ENCODE measurements at regions of chr19 and their contacts with region 1.

Region 1: DNA sequence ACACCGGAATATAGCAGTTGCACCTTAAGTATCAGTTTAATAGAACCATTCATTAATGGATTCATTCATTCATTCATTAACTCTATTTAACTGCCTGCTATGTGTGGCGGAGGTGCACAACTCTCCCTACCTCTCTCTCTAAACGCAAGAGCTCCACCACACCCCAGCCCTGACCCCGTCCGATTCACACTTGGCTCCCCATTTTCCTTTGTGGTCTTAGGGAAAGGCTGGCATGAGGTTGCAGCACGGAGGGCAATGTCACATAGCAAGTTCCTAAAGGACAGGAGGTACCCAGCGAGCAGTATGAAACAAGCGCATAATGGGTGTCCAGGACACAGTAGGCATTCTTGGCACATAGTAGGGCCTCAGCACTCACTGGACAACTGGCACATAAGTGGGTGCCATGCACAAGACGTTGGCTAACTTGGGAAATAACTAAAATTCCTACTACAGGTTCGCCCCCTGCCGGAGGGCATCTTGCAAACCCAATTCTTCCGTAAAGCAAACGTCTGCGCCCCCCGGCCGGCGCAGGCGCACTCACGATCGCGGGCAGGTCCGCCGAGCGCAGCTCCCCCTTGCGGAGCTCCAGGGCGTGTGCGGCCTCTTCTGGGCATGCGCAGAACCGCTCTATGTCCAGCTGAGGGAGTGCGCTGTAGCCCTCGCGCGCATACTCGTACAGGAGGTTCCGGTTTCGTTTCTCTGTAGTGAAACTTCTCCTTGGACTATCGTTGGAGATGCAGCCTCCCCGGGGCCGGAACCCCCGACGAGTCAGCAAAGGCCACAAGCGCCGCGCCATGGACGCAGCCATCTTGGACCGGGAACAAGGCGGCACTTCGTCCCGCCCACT is at the start of gene SARS2:
- DNase-seq: peak; percentile 90 to 97 (median 94)
- H3K4me3 ChIP-seq: peak within 1 kb of the TSS; percentile 31 to 77 (median 56)
- H3K27ac ChIP-seq: peak within 1 kb of the TSS in 4 of 5 donors; percentile 74 to 91 (median 80)
- H3K4me1 ChIP-seq: peaks cover 8 to 27% of the 10 kb centered on the region in 2 donors
- H3K27me3 ChIP-seq: no peaks in the 10 kb centered on the region
- CTCF ChIP-seq: peak; percentile 96 to 99 (median 98)
- POLR2A ChIP-seq: peak; percentile 12 to 58
- total RNA-seq, gene SARS2: 20.2 to 41.4 (median 35.1) TPM

Region 2: GRCh38 chr19:38739440-38740256 is 190.5 kb before region 1 on chr19:
- intact Hi-C with region 1: loop called in 1 of 2 experiments (anchors 10 kb)
- DNase-seq: no peak
- H3K4me3 ChIP-seq: no peak overlapping the region
- H3K27ac ChIP-seq: no peak overlapping the region
- H3K4me1 ChIP-seq: peaks cover 0 to 6% of the 10 kb centered on the region in 2 donors
- H3K27me3 ChIP-seq: no peaks in the 10 kb centered on the region
- CTCF ChIP-seq: no peak
- POLR2A ChIP-seq: no peak

Region 3: DNA sequence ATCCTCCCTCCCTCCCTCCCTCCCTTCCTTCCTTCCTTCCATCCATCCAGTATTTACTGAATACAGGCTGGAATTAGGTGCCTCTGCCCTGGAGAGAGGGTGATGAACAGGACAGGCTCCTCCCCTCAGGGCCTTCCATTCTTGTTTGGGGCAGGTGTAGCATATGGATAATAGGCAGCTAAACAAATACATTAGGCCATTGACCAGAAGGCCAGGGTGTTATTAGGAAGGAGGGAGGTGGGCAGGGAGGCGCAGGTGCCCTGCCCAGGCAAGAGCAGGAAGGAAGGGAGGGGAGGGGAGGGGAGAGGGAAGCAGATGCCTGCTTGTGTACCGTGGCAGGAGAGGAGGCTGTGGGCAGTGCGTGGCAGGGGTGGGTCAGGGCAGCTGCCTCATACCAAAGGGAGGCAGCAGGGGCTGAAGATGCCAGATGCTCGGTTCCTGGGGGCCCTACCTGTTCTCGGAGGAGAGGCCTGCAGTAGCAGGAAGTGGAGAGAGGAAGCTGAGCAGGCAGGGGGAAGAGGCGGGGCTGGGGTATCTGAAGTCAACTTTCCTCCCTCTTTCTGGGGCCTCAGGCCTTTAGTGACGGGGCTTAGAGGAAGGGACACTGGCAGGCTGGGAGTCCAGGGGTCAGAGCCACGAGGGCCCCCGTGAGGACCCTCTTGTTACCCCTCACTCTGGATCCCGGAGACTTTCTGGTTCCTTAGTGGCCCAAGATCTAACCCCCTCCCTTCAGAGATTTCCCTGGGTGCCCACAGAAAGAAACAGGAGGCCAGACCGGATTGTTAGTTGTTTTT is 52.2 kb before region 1 on chr19 and contains the start of gene RINL:
- intact Hi-C with region 1: no loop called
- DNase-seq: no peak
- H3K4me3 ChIP-seq: no peak within 1 kb of the TSS
- H3K27ac ChIP-seq: peak within 1 kb of the TSS in 2 of 5 donors; percentile 21 to 22
- H3K4me1 ChIP-seq: no peaks in the 10 kb centered on the region
- H3K27me3 ChIP-seq: no peaks in the 10 kb centered on the region
- CTCF ChIP-seq: no peak
- POLR2A ChIP-seq: no peak
- total RNA-seq, gene RINL: 0.54 to 11.4 (median 4.8) TPM

Region 4: DNA sequence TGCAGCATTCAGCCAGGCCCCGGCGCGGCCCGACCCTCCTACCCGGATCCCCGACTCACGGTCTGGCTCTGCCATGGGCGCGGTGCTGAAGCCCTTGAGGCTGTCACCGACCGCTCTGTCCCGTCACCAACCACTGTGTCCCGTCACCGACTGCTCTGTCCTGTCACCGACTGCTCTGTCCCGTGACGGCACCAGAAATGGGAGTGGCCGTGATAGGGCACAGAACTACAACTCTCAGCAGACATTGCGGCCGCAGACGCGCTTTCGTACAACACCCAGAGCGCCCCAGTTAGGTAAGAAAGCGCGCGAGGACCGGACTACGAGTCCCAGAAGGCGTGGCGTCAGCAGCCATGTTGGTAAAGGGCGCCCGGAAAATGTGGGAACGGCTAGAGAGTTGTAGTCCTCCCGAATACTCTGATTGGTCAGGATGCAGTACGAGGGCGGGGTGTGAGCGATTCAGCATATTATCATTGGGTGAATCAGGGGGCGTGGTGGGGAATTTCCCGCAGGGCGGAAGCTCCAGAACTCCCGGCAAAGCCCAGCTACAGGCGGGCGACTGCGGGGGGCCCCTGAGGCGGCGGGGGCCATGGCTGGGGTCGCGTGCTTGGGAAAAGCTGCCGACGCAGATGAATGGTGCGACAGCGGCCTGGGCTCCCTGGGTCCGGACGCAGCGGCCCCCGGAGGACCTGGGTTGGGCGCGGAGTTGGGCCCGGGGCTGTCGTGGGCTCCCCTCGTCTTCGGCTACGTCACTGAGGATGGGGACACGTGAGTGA is 30.5 kb before region 1 on chr19 and contains the starts of genes NFKBIB and SIRT2:
- intact Hi-C with region 1: no loop called
- DNase-seq: peak; percentile 99 to 100 (median 100)
- H3K4me3 ChIP-seq: peak within 1 kb of the TSS; percentile 35 to 91 (median 74)
- H3K27ac ChIP-seq: peak within 1 kb of the TSS; percentile 84 to 93 (median 89)
- H3K4me1 ChIP-seq: peaks cover 14 to 30% of the 10 kb centered on the region in 2 donors
- H3K27me3 ChIP-seq: no peaks in the 10 kb centered on the region
- CTCF ChIP-seq: peak in 1 of 6 experiments; percentile 4
- POLR2A ChIP-seq: peak; percentile 83 to 92
- total RNA-seq, gene NFKBIB: 17.2 to 51.6 (median 29.3) TPM
- total RNA-seq, gene SIRT2: 46.4 to 145 (median 70.4) TPM